Left cardiac atrium (tissue), 4 donors: ENCODE measurements at regions of chr15 and their contacts with region 1.

Region 1: GRCh38 chr15:91864664-91865063 is 11.2 kb downstream of the SLCO3A1 start:
- DNase-seq: no peak
- ATAC-seq: peak; percentile 2 to 12

Region 2: DNA sequence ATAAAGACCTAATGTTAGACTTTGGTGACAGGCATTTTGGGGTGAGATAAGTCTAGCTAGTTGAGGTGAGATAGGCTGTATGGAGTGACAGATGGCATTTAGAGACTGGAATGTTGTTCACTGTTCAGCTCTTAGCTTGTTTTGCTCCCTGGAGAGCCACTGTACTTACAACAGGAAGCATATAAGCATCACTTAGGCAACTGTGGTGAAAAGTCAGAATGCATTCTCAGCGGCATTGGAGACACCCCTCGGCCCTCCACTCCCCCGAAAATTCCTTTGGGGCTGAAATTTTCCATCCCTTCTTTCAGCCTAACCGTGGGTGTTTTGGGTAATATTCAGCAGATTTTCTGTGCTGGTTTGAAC is 62.2 kb after region 1 on chr15:
- intact Hi-C with region 1: loop called (anchors 5 to 10 kb)
- DNase-seq: no peak
- ATAC-seq: peak; percentile 24 to 66